ENCODE measurements at regions of chr5 and their contacts with region 1.

Region 1: DNA sequence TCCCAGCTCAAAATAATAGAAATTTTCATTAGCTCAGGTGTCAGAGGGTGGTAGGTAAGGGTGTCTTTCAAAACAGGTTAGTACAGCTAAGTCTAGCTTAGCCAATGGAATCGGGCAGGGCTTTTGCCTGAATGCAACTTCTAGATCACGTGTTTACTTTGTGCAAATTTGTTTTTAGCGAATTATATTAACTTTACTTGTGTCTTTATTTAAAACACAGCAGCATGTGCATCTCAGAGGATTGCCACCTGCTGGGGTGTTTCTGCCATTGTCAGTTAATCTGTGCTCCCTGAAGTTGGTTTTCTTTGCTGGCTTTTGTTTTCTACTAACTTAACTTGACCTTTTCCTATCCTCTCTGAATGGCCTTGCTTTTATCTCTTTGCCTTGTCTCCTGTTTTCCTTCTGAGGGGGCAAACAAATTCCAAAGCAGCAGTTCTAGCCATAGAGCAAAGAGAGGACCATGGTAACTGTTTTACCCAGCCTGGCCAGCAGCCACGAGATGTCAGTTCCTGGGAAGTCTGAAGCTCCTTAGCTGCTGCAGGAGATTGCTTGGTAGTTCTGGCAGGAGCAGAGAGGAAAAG is 67.6 kb downstream of the ARHGEF28 start:
- DNase-seq: peak; percentile 28
- ATAC-seq: no peak
- H3K4me3 ChIP-seq: no peak overlapping the region
- H3K27ac ChIP-seq: no peak overlapping the region; the same call in none of the 2 replicates
- H3K4me1 ChIP-seq: peaks cover 13% of the 10 kb centered on the region
- H3K27me3 ChIP-seq: no peaks in the 10 kb centered on the region
- CTCF ChIP-seq: peak; percentile 73

Region 2: GRCh38 chr5:73513960-73514359 is 179.6 kb before region 1 on chr5:
- CTCF ChIA-PET with region 1: no interaction called
- POLR2A ChIA-PET with region 1: no interaction called
- in situ Hi-C with region 1: no loop called
- intact Hi-C with region 1: no loop called
- DNase-seq: no peak
- ATAC-seq: no peak
- H3K4me3 ChIP-seq: no peak overlapping the region
- H3K27ac ChIP-seq: no peak overlapping the region
- H3K4me1 ChIP-seq: no peaks in the 10 kb centered on the region
- H3K27me3 ChIP-seq: no peaks in the 10 kb centered on the region
- CTCF ChIP-seq: no peak

Region 3: GRCh38 chr5:73591102-73591695 is 102.4 kb before region 1 on chr5:
- CTCF ChIA-PET with region 1: interaction called, 6 read pairs
- POLR2A ChIA-PET with region 1: no interaction called
- in situ Hi-C with region 1: no loop called
- intact Hi-C with region 1: loop called (anchors 5 kb)
- DNase-seq: peak; percentile 83
- ATAC-seq: peak; percentile 85
- H3K4me3 ChIP-seq: no peak overlapping the region
- H3K27ac ChIP-seq: no peak overlapping the region
- H3K4me1 ChIP-seq: no peaks in the 10 kb centered on the region
- H3K27me3 ChIP-seq: no peaks in the 10 kb centered on the region
- CTCF ChIP-seq: peak; percentile 76; the same call in 1 of the 2 replicates

Region 4: GRCh38 chr5:73625944-73626811 is 67.4 kb before region 1 on chr5 and contains the start of gene ARHGEF28:
- CTCF ChIA-PET with region 1: no interaction called
- POLR2A ChIA-PET with region 1: interaction called, 6 read pairs
- in situ Hi-C with region 1: no loop called
- intact Hi-C with region 1: loop called (anchors 5 kb)
- DNase-seq: no peak
- ATAC-seq: peak; percentile 90
- H3K4me3 ChIP-seq: peak within 1 kb of the TSS; percentile 60 to 79
- H3K27ac ChIP-seq: peak within 1 kb of the TSS; percentile 98
- H3K4me1 ChIP-seq: peaks cover 56% of the 10 kb centered on the region
- H3K27me3 ChIP-seq: no peaks in the 10 kb centered on the region
- CTCF ChIP-seq: no peak
- total RNA-seq, gene ARHGEF28: 34.8 TPM

Region 5: GRCh38 chr5:73649926-73650325 is 43.6 kb before region 1 on chr5:
- CTCF ChIA-PET with region 1: no interaction called
- POLR2A ChIA-PET with region 1: interaction called, 12 read pairs
- in situ Hi-C with region 1: no loop called
- intact Hi-C with region 1: no loop called
- DNase-seq: no peak
- ATAC-seq: no peak
- H3K4me3 ChIP-seq: no peak overlapping the region
- H3K27ac ChIP-seq: no peak overlapping the region
- H3K4me1 ChIP-seq: peaks cover 13% of the 10 kb centered on the region; the same call in 1 of the 2 replicates
- H3K27me3 ChIP-seq: no peaks in the 10 kb centered on the region
- CTCF ChIP-seq: no peak